ENCODE measurements at regions of chr14 and their contacts with region 1.

Region 1: GRCh38 chr14:34461334-34462131 is 507 bp downstream of the SPTSSA start:
- DNase-seq: peak; percentile 56
- ATAC-seq: peak; percentile 53
- H3K4me3 ChIP-seq: peak overlapping the region; percentile 86
- H3K27ac ChIP-seq: no peak overlapping the region
- H3K4me1 ChIP-seq: peaks cover 21% of the 10 kb centered on the region
- H3K27me3 ChIP-seq: no peaks in the 10 kb centered on the region
- CTCF ChIP-seq: no peak

Region 2: GRCh38 chr14:34237081-34237480 is 224.5 kb before region 1 on chr14:
- CTCF ChIA-PET with region 1: no interaction called
- POLR2A ChIA-PET with region 1: no interaction called
- intact Hi-C with region 1: no loop called
- DNase-seq: peak; percentile 92
- ATAC-seq: peak; percentile 94
- H3K4me3 ChIP-seq: no peak overlapping the region
- H3K27ac ChIP-seq: peak overlapping the region; percentile 57
- H3K4me1 ChIP-seq: peaks cover 25% of the 10 kb centered on the region
- H3K27me3 ChIP-seq: no peaks in the 10 kb centered on the region
- CTCF ChIP-seq: no peak

Region 3: GRCh38 chr14:34331728-34332623 is 129.6 kb before region 1 on chr14:
- CTCF ChIA-PET with region 1: no interaction called
- POLR2A ChIA-PET with region 1: interaction called, 16 read pairs
- intact Hi-C with region 1: loop called (anchors 5 kb)
- DNase-seq: peak; percentile 85
- ATAC-seq: peak; percentile 88
- H3K4me3 ChIP-seq: peak overlapping the region; percentile 20; the same call in 1 of the 2 replicates
- H3K27ac ChIP-seq: peak overlapping the region; percentile 66
- H3K4me1 ChIP-seq: peaks cover 21% of the 10 kb centered on the region
- H3K27me3 ChIP-seq: no peaks in the 10 kb centered on the region
- CTCF ChIP-seq: peak; percentile 94

Region 4: DNA sequence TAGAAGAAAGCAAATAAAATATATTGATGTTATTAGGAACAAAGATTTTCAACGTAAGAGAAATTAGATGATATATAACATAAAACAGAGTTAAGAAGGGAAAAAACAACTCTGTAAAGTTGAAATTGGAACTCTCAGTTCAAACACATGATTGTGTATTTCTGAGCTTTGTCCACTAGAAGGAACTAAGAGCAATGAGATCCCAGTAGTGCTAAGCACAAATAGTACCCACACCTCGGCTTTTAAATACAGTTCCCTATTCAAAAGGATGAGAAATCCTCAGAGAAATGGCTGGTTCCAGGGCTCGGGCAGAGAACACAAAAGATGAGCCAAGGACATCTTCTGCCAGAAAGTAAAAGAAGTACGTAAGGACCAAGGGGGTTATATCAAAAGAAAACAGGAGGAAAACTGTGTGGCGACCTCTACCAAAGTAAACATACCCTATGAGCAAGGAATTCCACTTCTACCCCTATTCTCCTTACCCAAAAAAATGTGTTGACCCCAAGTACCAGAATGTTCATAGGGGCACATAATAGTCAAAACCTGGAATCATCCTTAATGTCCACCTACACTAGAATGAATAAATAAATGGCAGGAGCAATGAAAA is 96.1 kb before region 1 on chr14:
- CTCF ChIA-PET with region 1: interaction called, 4 read pairs
- POLR2A ChIA-PET with region 1: interaction called, 3 read pairs
- intact Hi-C with region 1: loop called (anchors 2 kb)
- DNase-seq: peak; percentile 29
- ATAC-seq: no peak
- H3K4me3 ChIP-seq: no peak overlapping the region
- H3K27ac ChIP-seq: peak overlapping the region; percentile 96
- H3K4me1 ChIP-seq: peaks cover 65% of the 10 kb centered on the region
- H3K27me3 ChIP-seq: no peaks in the 10 kb centered on the region
- CTCF ChIP-seq: peak; percentile 52

Region 5: DNA sequence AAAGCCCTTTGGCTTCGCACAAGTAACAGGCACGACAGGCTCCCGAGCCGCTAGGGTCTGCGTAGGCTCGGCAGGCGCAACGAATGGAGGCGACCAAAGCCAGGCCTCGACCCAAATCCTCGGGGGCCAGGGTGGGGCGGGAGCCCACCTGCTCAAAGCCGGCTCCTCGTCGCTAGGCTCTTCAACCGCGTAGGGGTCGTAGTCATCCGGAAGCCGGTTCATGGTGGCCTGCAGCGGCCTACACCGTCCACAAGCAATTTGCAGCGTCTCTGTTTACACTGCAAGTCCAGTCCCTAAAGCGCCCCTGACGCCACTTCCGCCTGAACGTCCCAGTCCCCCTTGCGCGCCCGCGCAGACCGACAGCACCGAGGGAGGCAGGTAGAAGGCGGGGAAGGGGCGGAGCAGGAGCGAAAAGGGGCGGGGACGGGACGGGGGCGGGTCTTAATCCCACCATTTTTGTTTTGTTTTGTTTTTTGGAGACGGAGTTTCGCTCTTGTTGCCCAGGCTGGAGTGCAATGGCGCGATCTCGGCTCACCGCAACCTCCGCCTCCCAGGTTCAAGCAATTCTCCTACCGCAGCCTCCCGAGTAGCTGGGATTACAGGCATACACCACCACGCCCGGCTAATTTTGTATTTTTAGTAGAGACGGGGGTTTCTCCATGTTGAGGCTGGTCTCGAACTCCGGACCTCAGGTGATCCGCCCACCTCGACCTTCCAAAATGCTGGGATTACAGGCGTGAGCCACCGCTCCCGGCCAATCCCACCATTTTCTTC is 78.1 kb after region 1 on chr14 and contains the start of gene EAPP:
- CTCF ChIA-PET with region 1: no interaction called
- POLR2A ChIA-PET with region 1: interaction called, 4 read pairs
- intact Hi-C with region 1: loop called (anchors 5 kb)
- DNase-seq: peak; percentile 98
- ATAC-seq: peak; percentile 99
- H3K4me3 ChIP-seq: peak within 1 kb of the TSS; percentile 95
- H3K27ac ChIP-seq: peak within 1 kb of the TSS; percentile 50
- H3K4me1 ChIP-seq: peaks cover 8% of the 10 kb centered on the region; the same call in 1 of the 2 replicates
- H3K27me3 ChIP-seq: no peaks in the 10 kb centered on the region
- CTCF ChIP-seq: no peak
- total RNA-seq, gene EAPP: 38.2 and 49.5 TPM in 2 replicates

Region 6: GRCh38 chr14:34593740-34594375 is 132.3 kb after region 1 on chr14:
- CTCF ChIA-PET with region 1: no interaction called
- POLR2A ChIA-PET with region 1: no interaction called
- intact Hi-C with region 1: no loop called
- DNase-seq: no peak
- ATAC-seq: no peak
- H3K4me3 ChIP-seq: no peak overlapping the region
- H3K27ac ChIP-seq: no peak overlapping the region
- H3K4me1 ChIP-seq: no peaks in the 10 kb centered on the region
- H3K27me3 ChIP-seq: no peaks in the 10 kb centered on the region
- CTCF ChIP-seq: no peak